HEK293T (cell line): ENCODE measurements at regions of chr12 and their contacts with region 1.

Region 1: GRCh38 chr12:6326336-6326838 is 15.5 kb downstream of the TNFRSF1A start:
- DNase-seq: peak; percentile 77

Region 2: GRCh38 chr12:6355491-6356371 is 29.3 kb after region 1 on chr12:
- CTCF ChIA-PET with region 1: interaction called, 10 read pairs
- POLR2A ChIA-PET with region 1: interaction called, 3 read pairs
- DNase-seq: no peak

Region 3: GRCh38 chr12:6376079-6376869 is 49.9 kb after region 1 on chr12:
- CTCF ChIA-PET with region 1: interaction called, 10 read pairs
- POLR2A ChIA-PET with region 1: interaction called, 5 read pairs
- DNase-seq: peak; percentile 75